PC-3 (cell line): ENCODE measurements at regions of chr12 and their contacts with region 1.

Region 1: DNA sequence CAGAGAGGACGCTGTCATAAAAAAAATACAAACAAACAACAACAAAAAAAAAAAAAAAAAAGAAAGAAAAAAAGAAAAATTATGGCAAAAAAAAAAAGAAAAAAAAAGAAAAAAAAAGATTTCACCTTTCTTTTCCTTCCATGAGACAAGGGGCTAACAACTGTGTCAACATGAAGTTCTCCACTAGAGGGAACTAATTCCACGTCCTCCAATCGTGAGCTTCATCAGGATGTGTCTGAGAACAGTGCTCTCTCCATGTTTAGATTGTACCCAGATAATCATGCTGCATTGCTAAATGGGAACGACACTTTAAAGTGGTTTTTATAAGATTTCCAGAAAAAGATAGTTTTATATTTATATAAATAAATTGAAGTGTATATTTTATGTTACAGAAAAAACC is 96.2 kb upstream of the PTPRB start:
- DNase-seq: peak; percentile 91
- ATAC-seq: peak; percentile 93
- H3K4me3 ChIP-seq: no peak overlapping the region
- H3K27ac ChIP-seq: no peak overlapping the region
- H3K4me1 ChIP-seq: peaks cover 4% of the 10 kb centered on the region; the same call in 1 of the 2 replicates
- H3K27me3 ChIP-seq: no peaks in the 10 kb centered on the region
- CTCF ChIP-seq: peak; percentile 71

Region 2: GRCh38 chr12:69879041-69879960 is 854.1 kb before region 1 on chr12:
- CTCF ChIA-PET with region 1: interaction called, 3 read pairs
- POLR2A ChIA-PET with region 1: no interaction called
- intact Hi-C with region 1: loop called (anchors 1 kb)
- DNase-seq: peak; percentile 88
- ATAC-seq: peak; percentile 95
- H3K4me3 ChIP-seq: peak overlapping the region; percentile 66
- H3K27ac ChIP-seq: no peak overlapping the region
- H3K4me1 ChIP-seq: no peaks in the 10 kb centered on the region; the same call in 1 of the 2 replicates
- H3K27me3 ChIP-seq: no peaks in the 10 kb centered on the region
- CTCF ChIP-seq: peak; percentile 97

Region 3: GRCh38 chr12:70449074-70449761 is 284.2 kb before region 1 on chr12:
- CTCF ChIA-PET with region 1: no interaction called
- POLR2A ChIA-PET with region 1: no interaction called
- intact Hi-C with region 1: no loop called
- DNase-seq: peak; percentile 96
- ATAC-seq: peak; percentile 96
- H3K4me3 ChIP-seq: peak overlapping the region; percentile 53
- H3K27ac ChIP-seq: peak overlapping the region; percentile 89
- H3K4me1 ChIP-seq: peaks cover 22% of the 10 kb centered on the region
- H3K27me3 ChIP-seq: no peaks in the 10 kb centered on the region
- CTCF ChIP-seq: no peak

Region 4: DNA sequence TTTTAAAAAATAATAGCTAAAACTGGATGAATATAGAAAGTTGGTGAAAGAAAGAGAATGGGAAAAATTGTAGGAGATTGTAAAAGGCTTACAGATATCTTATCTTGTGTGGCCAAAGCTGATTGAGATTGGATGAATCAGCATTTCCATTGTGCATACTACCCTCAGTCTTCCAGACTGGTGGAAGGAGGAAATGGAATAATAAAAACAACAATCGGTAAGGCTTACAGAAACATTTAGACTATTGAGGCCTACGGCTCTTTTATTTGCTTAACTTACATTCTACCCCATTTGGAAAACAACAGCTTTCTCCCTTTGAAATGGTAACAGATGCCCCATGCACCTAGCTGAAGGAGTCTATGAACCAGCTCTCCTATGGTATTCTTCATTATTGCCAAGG is 225.9 kb before region 1 on chr12:
- CTCF ChIA-PET with region 1: no interaction called
- POLR2A ChIA-PET with region 1: no interaction called
- intact Hi-C with region 1: no loop called
- DNase-seq: no peak
- ATAC-seq: no peak
- H3K4me3 ChIP-seq: no peak overlapping the region
- H3K27ac ChIP-seq: no peak overlapping the region
- H3K4me1 ChIP-seq: no peaks in the 10 kb centered on the region
- H3K27me3 ChIP-seq: no peaks in the 10 kb centered on the region
- CTCF ChIP-seq: no peak

Region 5: DNA sequence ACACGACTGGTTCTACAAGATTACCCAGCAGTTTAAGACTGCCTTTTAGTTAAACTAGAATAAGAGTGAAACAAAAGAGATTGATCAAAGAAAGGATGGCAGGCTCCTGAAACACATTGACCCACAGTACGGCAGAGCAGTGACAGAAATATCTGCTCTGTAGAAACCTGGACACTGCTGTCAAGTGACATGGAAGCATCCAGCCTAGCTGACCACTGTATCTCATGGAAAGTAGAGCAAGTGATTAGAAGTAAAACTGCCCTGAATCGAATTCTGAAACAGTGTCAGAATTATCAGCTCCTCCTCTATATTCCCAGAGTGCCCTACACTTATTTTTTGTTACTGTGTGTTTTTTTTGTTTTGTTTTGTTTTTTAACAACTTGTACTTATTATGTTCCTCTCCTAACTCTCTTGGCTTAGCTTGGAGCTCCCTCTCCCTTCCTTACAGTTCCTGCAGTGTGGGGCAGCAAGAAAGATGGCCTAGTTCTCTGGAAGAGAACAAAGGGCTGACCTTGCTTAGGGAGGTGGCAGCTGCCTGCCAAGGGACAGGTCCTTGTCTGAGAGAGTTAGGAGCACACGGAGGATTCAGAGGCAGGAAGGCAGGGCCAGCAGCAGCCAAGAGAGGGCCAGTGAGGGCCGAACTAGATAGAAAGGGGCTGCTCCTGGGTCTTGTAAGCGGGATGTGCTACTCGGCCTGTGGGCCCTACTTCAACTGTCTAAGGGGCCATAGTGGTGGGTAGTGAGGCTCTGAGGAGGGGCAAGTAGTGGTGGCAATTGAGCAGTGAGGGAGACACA is 90.0 kb after region 1 on chr12:
- CTCF ChIA-PET with region 1: interaction called, 4 read pairs
- POLR2A ChIA-PET with region 1: no interaction called
- intact Hi-C with region 1: loop called (anchors 1 kb)
- DNase-seq: peak; percentile 34
- ATAC-seq: peak; percentile 75
- H3K4me3 ChIP-seq: no peak overlapping the region
- H3K27ac ChIP-seq: no peak overlapping the region
- H3K4me1 ChIP-seq: no peaks in the 10 kb centered on the region
- H3K27me3 ChIP-seq: no peaks in the 10 kb centered on the region
- CTCF ChIP-seq: peak; percentile 47

Region 6: GRCh38 chr12:70849265-70849960 is 116.0 kb after region 1 on chr12:
- CTCF ChIA-PET with region 1: interaction called, 5 read pairs
- POLR2A ChIA-PET with region 1: no interaction called
- intact Hi-C with region 1: loop called (anchors 1 kb)
- DNase-seq: peak; percentile 61
- ATAC-seq: 0 out of 2 replicates have a peak, but pooled peaks have one; percentile 22
- H3K4me3 ChIP-seq: no peak overlapping the region
- H3K27ac ChIP-seq: no peak overlapping the region
- H3K4me1 ChIP-seq: no peaks in the 10 kb centered on the region
- H3K27me3 ChIP-seq: no peaks in the 10 kb centered on the region
- CTCF ChIP-seq: peak; percentile 83

Region 7: GRCh38 chr12:70925539-70925938 is 192.2 kb after region 1 on chr12:
- CTCF ChIA-PET with region 1: no interaction called
- POLR2A ChIA-PET with region 1: interaction called, 15 read pairs
- intact Hi-C with region 1: no loop called
- DNase-seq: no peak
- ATAC-seq: no peak
- H3K4me3 ChIP-seq: no peak overlapping the region
- H3K27ac ChIP-seq: no peak overlapping the region
- H3K4me1 ChIP-seq: no peaks in the 10 kb centered on the region
- H3K27me3 ChIP-seq: peaks cover 20% of the 10 kb centered on the region
- CTCF ChIP-seq: no peak

Region 8: GRCh38 chr12:70936203-70936813 is 202.9 kb after region 1 on chr12:
- CTCF ChIA-PET with region 1: no interaction called
- POLR2A ChIA-PET with region 1: no interaction called
- intact Hi-C with region 1: no loop called
- DNase-seq: no peak
- ATAC-seq: no peak
- H3K4me3 ChIP-seq: no peak overlapping the region
- H3K27ac ChIP-seq: no peak overlapping the region
- H3K4me1 ChIP-seq: no peaks in the 10 kb centered on the region
- H3K27me3 ChIP-seq: peaks cover 60% of the 10 kb centered on the region
- CTCF ChIP-seq: no peak

Region 9: DNA sequence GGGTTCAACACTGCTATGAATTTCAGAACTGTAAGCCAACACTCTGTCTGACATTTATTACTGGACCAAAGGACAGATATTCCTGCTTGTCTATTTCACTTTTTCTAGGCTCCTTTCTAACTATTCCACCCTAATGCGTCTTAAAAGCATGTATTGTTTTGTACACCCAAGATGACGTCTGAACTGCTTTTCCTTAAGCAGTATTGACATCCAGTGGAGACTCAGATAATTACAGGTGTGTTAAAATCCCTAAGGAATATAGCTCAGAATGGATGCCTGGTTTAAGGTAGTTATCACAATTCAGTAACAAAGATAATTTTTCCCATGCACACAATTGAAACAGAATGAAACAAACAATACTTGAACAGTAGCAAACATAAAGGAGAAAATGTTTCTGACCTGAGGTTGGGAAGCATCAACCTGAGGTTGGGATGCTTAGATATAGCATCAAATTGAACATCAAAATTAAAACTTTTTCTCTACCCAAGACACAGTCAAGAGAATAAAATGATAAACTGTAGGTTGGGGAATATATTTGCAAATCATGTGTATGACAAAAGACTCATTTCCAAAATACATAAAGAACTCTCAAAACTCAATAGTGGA is 280.9 kb after region 1 on chr12:
- CTCF ChIA-PET with region 1: interaction called, 5 read pairs
- POLR2A ChIA-PET with region 1: no interaction called
- intact Hi-C with region 1: loop called (anchors 1 kb)
- DNase-seq: peak; percentile 81
- ATAC-seq: peak; percentile 84
- H3K4me3 ChIP-seq: peak overlapping the region; percentile 33; the same call in 1 of the 2 replicates
- H3K27ac ChIP-seq: no peak overlapping the region
- H3K4me1 ChIP-seq: peaks cover 11% of the 10 kb centered on the region
- H3K27me3 ChIP-seq: no peaks in the 10 kb centered on the region
- CTCF ChIP-seq: peak; percentile 91

Region 10: GRCh38 chr12:71371122-71371521 is 637.7 kb after region 1 on chr12:
- CTCF ChIA-PET with region 1: interaction called, 12 read pairs
- POLR2A ChIA-PET with region 1: no interaction called
- intact Hi-C with region 1: no loop called
- DNase-seq: peak; percentile 47
- ATAC-seq: peak; percentile 74
- H3K4me3 ChIP-seq: no peak overlapping the region
- H3K27ac ChIP-seq: no peak overlapping the region
- H3K4me1 ChIP-seq: no peaks in the 10 kb centered on the region
- H3K27me3 ChIP-seq: no peaks in the 10 kb centered on the region
- CTCF ChIP-seq: peak; percentile 62